Psoas muscle (tissue), 8 donors: ENCODE measurements at regions of chr2 and their contacts with region 1.

Region 1: DNA sequence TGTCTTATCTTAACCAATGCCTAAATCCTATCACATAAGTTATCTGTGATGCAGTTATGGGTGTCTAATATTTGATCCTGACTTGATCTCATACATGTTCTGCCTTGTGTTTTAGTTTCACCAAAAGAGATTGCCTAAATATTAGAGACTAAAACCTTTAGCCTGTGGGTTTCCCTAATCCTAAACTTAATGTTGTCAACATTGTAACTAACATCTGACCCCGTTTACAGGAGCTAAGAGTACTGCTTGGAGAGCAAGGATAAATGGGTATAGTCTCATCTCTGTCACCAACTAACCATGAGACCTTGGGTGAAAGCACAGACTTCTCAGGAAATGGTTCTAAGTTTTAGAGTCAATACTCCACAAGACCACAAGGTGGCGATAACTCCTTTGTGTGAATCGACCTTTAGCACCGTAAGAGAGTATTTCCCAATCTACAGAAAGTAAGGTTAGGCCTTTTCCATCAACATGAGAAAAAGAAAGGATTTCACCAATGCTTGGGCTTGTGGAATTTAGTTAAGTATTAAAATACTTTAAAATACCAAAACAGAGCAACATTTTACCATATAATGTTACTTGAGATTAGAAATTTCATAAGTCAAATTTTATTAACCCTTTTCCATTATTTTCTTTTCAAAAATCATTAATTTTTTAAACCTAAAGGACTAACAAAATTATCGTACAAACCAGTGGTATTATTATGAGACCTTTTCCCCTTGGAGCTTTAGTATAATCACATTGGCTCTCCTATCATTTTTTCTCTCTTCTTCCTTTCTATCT is 60.5 kb downstream of the G6PC2 start:
- DNase-seq: no peak
- ATAC-seq: peak; percentile 58 to 87 (median 71)
- H3K4me3 ChIP-seq: no peak overlapping the region
- H3K27ac ChIP-seq: no peak overlapping the region
- H3K4me1 ChIP-seq: no peaks in the 10 kb centered on the region
- H3K27me3 ChIP-seq: no peaks in the 10 kb centered on the region
- CTCF ChIP-seq: peak; percentile 80

Region 2: DNA sequence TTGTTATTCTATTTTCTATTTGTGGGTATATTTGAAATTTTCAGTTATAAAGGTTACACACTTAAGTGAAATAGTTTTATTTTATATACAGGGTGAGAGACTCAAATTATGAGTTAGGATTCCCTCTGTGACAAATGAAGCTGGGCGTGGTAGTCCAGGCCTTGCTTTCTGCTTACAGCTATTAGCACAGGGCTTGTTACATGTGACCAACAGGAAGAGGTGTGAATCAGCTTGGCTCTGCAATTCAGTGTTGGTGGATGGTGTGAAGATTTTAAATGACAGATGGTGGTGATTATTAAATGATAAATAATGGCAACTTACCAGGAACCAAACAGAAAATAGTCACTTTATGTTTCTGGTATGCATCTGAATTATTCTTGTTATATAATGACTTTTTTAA is 223.6 kb before region 1 on chr2:
- intact Hi-C with region 1: no loop called
- DNase-seq: no peak
- ATAC-seq: no peak
- H3K4me3 ChIP-seq: no peak overlapping the region
- H3K27ac ChIP-seq: no peak overlapping the region
- H3K4me1 ChIP-seq: peaks cover 20% of the 10 kb centered on the region
- H3K27me3 ChIP-seq: no peaks in the 10 kb centered on the region
- CTCF ChIP-seq: no peak

Region 3: DNA sequence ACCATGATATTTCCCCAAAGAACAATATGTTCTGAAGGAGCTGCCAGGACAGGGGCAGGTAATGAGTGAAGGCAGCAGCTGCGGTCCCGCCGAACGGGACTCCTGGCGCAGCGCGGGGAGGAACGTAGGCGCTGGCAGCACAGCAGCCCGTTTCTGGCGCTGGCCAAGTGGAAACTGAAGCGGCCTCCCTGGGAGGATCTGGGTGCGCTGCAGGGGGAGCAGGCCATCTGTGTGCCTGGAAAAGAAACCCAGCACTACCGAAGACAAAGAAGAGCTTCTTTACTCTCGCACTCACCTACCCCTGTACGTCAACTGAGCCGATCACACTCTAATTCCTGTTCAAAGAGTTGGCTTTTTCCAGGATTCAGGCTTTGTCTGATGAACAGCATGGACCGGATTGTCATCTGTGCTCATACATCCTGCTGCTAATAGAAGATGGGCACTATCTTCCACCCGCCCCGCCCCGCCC is 48.7 kb before region 1 on chr2:
- intact Hi-C with region 1: no loop called
- DNase-seq: peak; percentile 70 to 89
- ATAC-seq: peak; percentile 94 to 99 (median 98)
- H3K4me3 ChIP-seq: peak overlapping the region; percentile 52
- H3K27ac ChIP-seq: peak overlapping the region; percentile 64
- H3K4me1 ChIP-seq: peaks cover 13% of the 10 kb centered on the region
- H3K27me3 ChIP-seq: no peaks in the 10 kb centered on the region
- CTCF ChIP-seq: no peak

Region 4: DNA sequence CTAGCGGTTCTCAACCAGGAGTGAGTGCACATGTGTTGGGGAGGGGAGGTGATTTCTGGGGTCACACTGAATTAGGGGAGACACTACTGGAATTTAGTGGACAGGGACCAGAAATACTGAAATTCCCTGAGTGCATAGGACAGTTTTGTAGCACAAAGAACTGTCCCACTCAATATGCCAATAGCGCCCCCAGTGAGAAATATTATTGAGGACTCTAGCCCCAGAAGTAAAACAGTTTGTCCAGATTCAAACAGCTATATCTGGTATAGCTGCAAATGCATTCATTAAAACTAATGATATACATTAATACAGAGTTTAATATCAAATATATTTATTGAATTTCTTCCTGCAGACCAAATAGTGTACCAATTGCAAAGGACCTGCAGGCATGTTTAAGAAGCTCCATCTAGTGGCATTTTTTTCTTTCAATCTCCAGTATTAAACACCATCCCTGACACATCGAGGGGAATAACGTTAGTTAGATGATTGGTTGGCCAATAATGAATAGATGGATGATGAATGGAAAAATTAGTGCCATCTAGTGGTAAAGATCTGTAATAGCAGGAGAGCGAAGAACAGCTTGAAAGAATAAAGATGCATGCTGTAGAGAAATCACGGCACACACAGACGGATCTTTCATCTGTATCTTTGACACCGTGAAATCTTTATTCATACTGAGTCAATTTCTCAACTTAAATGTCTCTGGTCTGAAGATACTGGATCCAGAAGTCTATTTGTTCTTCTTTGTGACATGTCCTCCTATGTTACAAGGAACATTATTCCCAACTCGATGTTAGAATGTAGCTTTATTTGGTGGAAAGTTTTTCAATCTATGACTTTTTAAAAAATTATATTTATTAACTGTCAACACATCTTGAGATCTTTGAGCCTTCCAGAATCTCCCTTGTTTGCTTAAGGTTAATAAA is 170.2 kb after region 1 on chr2:
- intact Hi-C with region 1: loop called (anchors 2 to 5 kb)
- DNase-seq: no peak
- ATAC-seq: peak in 2 of 4 donors; percentile 48
- H3K4me3 ChIP-seq: no peak overlapping the region
- H3K27ac ChIP-seq: no peak overlapping the region
- H3K4me1 ChIP-seq: no peaks in the 10 kb centered on the region
- H3K27me3 ChIP-seq: no peaks in the 10 kb centered on the region
- CTCF ChIP-seq: peak; percentile 84

Region 5: DNA sequence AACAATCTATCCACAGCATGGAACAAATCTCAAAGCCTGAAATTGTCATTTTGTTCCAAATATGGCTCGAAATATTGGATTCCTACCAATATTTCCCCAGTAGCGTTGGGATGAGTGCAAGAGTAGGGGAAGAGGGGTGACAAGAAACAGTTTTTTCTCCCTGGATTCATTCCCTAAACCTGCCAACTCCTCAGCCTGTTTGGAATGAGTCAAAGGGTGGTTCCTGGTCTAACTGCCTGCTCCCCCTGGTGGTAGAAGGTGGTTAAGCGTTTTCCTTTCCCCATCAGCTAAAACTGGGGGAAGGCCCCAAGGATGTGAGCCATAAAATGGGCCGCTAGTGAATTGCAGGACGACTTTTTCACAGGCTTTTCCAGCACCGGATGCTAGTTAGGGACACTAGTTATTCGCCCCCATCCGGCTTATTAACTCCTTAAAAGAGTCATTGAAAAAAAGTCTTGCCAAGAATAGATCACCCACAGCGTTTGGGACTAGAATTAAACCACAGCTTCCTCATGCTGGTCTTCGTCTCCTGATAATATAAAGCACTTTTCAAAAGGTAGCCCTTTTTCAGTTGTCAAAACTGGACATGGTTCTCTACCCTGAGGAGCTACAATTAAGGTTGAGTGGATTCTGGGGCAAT is 180.2 kb after region 1 on chr2:
- intact Hi-C with region 1: loop called in 1 of 2 experiments (anchors 2 kb)
- DNase-seq: no peak
- ATAC-seq: peak in 2 of 4 donors; percentile 55 to 61
- H3K4me3 ChIP-seq: no peak overlapping the region
- H3K27ac ChIP-seq: no peak overlapping the region
- H3K4me1 ChIP-seq: no peaks in the 10 kb centered on the region
- H3K27me3 ChIP-seq: no peaks in the 10 kb centered on the region
- CTCF ChIP-seq: peak; percentile 63